ENCODE measurements at regions of chr1 and their contacts with region 1.

Region 1: DNA sequence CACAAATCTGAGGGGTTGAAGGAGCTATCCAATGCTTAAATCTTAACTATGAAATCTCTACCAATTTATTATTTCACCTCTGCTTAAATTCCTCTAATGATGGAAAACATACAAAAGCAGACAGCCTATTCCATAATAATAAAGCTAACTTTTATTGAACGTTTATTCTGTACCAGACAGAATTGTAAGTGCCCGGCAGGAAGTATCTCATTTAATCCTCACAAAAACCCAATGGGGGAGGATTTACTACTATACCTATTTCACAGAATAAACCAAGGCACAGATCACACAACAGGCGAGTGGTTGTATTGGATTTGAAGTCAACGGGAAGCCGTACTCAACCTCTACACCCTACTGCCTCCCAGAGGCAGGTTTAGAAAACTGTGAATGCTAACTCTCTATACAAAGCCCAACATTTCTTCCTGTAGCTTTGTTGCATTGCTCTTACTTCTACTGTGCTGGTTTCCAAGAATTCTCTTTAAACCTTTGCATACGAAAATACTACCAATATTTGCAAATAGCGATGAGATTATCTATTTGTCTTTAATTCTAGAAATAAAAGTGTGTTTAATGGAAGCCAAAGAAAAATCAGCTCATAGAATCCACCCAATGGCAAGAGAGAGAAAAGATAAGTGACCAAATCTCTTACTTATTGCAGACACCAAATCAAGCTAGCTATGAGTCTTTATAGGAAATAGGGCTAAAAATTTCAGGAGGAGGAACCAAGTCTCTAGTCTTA is 33.5 kb upstream of the C1orf53 start:
- DNase-seq: peak; percentile 62
- ATAC-seq: peak; percentile 93
- H3K4me3 Mint-ChIP-seq: no peak overlapping the region
- H3K27ac Mint-ChIP-seq: no peak overlapping the region
- H3K4me1 Mint-ChIP-seq: no peaks in the 10 kb centered on the region
- H3K27me3 Mint-ChIP-seq: peaks cover 9% of the 10 kb centered on the region

Region 2: DNA sequence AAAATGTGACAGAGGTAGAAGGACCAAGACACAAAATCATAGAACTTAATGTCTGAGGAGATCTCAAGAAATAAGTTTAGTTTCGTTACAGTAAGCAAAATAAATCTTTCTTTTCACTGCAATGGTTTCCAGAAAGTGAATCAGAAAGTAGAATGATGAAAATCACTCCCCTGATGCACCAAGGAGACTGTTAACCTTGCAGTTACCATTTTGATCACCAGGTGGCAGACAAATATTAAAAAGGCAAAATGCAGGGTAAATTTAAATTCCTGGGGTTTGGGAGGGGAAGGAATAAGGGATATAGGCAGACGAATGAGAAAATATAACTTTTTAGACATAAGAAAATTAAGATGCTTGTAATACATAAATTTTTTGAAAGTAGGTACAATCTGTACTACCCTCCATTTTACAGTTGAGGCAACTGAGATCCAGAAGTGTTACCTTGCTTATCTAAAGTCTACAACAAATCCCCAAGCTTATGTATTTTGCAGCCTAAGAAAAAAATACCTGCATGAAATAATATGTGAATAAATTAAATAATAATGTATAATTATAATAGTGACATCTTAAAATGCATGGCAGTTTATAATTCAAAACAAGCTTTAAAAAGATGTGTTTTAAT is 347.7 kb before region 1 on chr1:
- CTCF ChIA-PET with region 1: interaction called, 40 read pairs
- POLR2A ChIA-PET with region 1: no interaction called
- DNase-seq: peak; percentile 49
- ATAC-seq: peak; percentile 36
- H3K4me3 Mint-ChIP-seq: no peak overlapping the region
- H3K27ac Mint-ChIP-seq: no peak overlapping the region
- H3K4me1 Mint-ChIP-seq: no peaks in the 10 kb centered on the region
- H3K27me3 Mint-ChIP-seq: no peaks in the 10 kb centered on the region

Region 3: DNA sequence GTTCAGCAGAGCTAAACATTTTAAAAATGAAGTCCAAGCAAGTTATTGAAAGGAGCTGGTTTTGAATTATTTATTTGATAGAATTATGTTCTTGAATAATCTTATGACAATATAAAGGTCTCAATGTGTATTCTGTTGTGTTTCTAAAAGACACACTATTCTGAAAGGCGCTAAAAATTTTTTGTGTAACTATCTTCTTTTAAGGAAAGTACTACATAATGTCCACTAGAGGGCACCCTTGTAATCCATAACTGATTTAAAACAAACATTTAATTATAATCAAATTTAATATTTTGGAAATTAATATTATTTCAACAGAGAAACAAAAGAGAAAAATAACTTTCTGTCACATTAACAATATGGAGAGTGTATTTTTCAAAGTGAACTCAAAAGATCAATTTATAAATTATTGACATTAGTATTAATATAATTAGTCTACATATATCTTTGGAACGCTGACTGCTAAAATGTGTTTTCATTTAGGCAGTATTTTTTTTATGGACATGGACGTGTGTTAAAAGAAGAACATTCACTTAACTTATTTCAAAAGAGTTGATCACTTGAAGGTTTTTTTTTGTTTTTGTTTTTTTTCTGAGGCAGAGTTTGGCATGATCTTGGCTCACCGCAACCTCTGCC is 342.1 kb before region 1 on chr1:
- CTCF ChIA-PET with region 1: interaction called, 37 read pairs
- POLR2A ChIA-PET with region 1: no interaction called
- DNase-seq: no peak
- ATAC-seq: no peak
- H3K4me3 Mint-ChIP-seq: no peak overlapping the region
- H3K27ac Mint-ChIP-seq: no peak overlapping the region
- H3K4me1 Mint-ChIP-seq: no peaks in the 10 kb centered on the region
- H3K27me3 Mint-ChIP-seq: no peaks in the 10 kb centered on the region

Region 4: DNA sequence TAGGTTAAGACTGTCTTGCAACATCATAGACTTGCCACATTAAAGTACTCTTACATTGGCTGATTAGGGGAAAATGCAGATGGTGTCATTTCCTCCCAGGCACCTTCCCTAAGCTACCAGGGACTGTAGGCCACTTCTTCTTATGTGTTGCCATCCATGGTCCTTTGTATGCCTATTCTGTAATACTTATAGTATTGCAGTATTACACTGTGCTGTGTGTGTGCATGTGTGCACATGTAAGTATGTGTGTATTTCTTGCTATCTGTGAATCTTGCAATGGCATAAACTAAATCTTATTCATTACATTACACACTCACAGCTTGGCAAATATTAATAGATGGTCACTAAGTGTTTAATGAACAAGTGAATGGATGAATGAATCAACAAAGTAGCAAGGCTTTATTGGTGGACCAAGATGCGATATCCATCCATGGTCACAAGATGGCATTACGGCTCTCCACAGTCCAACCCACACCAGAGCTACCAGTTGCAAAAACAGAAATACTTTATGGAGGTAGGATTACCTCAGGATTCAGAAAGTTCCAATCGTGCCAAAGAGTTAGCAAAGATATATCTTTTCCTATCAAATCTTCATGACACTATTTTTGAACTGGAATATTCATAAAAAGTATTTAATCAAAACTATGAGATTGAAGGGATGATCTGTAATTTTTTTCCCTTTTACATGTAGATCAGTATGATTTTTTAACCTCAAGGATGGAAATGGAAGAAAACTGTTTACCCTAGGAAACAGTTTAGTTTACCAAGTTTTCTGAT is 253.8 kb before region 1 on chr1:
- CTCF ChIA-PET with region 1: interaction called, 49 read pairs
- POLR2A ChIA-PET with region 1: no interaction called
- DNase-seq: peak; percentile 45
- ATAC-seq: peak; percentile 67
- H3K4me3 Mint-ChIP-seq: no peak overlapping the region
- H3K27ac Mint-ChIP-seq: no peak overlapping the region
- H3K4me1 Mint-ChIP-seq: no peaks in the 10 kb centered on the region
- H3K27me3 Mint-ChIP-seq: no peaks in the 10 kb centered on the region

Region 5: GRCh38 chr1:197775282-197776262 is 93.3 kb before region 1 on chr1 and contains the start of gene DENND1B:
- CTCF ChIA-PET with region 1: interaction called, 11 read pairs
- POLR2A ChIA-PET with region 1: no interaction called
- DNase-seq: peak; percentile 90
- ATAC-seq: peak; percentile 65
- H3K4me3 Mint-ChIP-seq: peak within 1 kb of the TSS; percentile 89
- H3K27ac Mint-ChIP-seq: peak within 1 kb of the TSS; percentile 99
- H3K4me1 Mint-ChIP-seq: peaks cover 65% of the 10 kb centered on the region
- H3K27me3 Mint-ChIP-seq: no peaks in the 10 kb centered on the region
- total RNA-seq, gene DENND1B: 22.5 to 27.9 TPM

Region 6: GRCh38 chr1:197884173-197884572 is 15.3 kb after region 1 on chr1:
- CTCF ChIA-PET with region 1: interaction called, 13 read pairs
- POLR2A ChIA-PET with region 1: no interaction called
- DNase-seq: no peak
- ATAC-seq: no peak
- H3K4me3 Mint-ChIP-seq: no peak overlapping the region
- H3K27ac Mint-ChIP-seq: no peak overlapping the region
- H3K4me1 Mint-ChIP-seq: no peaks in the 10 kb centered on the region
- H3K27me3 Mint-ChIP-seq: peaks cover 40% of the 10 kb centered on the region

Region 7: DNA sequence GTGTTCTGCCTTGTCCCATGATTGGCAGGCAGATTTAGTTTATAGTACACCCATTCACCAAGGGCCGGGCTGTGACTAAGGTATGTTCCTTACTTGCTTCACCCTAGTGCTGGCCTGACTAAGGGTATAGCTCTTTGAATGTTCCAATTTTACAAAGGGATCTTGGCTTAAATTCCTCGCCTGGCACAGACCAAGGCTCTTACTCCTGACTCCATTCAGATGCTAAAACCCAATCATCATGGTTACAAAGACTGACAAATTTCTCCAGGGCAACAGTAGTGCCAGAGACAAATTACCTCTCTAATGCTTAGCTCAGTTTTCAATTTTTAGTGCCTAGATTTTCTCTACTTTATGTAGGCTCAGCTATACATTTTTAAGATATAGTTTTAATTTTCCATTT is 22.0 kb after region 1 on chr1:
- CTCF ChIA-PET with region 1: interaction called, 11 read pairs
- POLR2A ChIA-PET with region 1: no interaction called
- DNase-seq: no peak
- ATAC-seq: no peak
- H3K4me3 Mint-ChIP-seq: no peak overlapping the region
- H3K27ac Mint-ChIP-seq: no peak overlapping the region
- H3K4me1 Mint-ChIP-seq: no peaks in the 10 kb centered on the region
- H3K27me3 Mint-ChIP-seq: peaks cover 37% of the 10 kb centered on the region

Region 8: GRCh38 chr1:197984289-197984688 is 115.4 kb after region 1 on chr1:
- CTCF ChIA-PET with region 1: no interaction called
- POLR2A ChIA-PET with region 1: no interaction called
- DNase-seq: no peak
- ATAC-seq: no peak
- H3K4me3 Mint-ChIP-seq: no peak overlapping the region
- H3K27ac Mint-ChIP-seq: no peak overlapping the region
- H3K4me1 Mint-ChIP-seq: peaks cover 4% of the 10 kb centered on the region
- H3K27me3 Mint-ChIP-seq: peaks cover 4% of the 10 kb centered on the region